Left lung (tissue), 14 donors: ENCODE measurements at regions of chr11 and their contacts with region 1.

Region 1: GRCh38 chr11:66579017-66579606 is 10.7 kb upstream of the CTSF start:
- DNase-seq: peak; percentile 61 to 93 (median 78)
- ATAC-seq: peak; percentile 98
- H3K4me3 ChIP-seq: no peak overlapping the region
- H3K27ac ChIP-seq: no peak overlapping the region
- H3K4me1 ChIP-seq: peaks cover 0 to 7% of the 10 kb centered on the region in 2 donors
- H3K27me3 ChIP-seq: no peaks in the 10 kb centered on the region
- CTCF ChIP-seq: peak; percentile 81

Region 2: DNA sequence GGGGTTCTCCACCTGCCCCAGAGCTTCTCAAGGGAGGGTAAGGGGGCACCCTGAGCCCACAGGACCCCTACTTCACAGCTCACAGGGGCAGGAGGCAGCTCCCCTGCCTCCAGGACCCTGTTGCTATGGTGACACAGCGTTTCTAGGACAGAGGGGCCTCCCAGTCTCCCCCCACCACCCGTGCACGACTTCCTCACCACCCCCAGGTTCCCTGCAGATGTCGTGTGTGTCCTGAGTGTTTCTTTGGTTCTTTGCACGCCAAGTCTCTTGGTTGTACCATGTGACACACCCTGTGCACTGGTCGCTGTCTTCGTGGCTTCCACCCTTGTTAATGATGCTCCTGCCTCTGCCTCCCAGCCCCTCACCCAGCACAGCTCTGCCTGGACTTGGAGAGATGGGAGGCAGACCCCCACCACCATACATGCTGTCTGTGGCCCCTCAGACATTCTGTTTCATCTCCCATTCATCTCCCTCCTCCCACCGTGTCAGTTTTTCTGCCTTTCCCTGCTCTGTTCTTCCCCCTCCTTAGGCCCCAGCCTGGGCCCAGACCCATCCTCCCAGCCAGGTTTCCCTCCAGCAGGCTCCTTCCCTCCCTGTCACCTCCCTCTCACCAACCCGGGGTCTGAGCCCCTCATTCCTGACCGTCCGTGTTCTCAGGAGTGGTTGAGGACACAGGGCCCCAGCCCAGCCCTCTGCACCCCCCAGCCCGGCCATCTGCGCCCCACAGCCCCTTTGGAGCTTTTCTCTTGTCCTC is 335.2 kb before region 1 on chr11:
- intact Hi-C with region 1: no loop called
- DNase-seq: no peak
- ATAC-seq: no peak
- H3K4me3 ChIP-seq: no peak overlapping the region
- H3K27ac ChIP-seq: no peak overlapping the region
- H3K4me1 ChIP-seq: no peaks in the 10 kb centered on the region
- H3K27me3 ChIP-seq: no peaks in the 10 kb centered on the region
- CTCF ChIP-seq: no peak

Region 3: DNA sequence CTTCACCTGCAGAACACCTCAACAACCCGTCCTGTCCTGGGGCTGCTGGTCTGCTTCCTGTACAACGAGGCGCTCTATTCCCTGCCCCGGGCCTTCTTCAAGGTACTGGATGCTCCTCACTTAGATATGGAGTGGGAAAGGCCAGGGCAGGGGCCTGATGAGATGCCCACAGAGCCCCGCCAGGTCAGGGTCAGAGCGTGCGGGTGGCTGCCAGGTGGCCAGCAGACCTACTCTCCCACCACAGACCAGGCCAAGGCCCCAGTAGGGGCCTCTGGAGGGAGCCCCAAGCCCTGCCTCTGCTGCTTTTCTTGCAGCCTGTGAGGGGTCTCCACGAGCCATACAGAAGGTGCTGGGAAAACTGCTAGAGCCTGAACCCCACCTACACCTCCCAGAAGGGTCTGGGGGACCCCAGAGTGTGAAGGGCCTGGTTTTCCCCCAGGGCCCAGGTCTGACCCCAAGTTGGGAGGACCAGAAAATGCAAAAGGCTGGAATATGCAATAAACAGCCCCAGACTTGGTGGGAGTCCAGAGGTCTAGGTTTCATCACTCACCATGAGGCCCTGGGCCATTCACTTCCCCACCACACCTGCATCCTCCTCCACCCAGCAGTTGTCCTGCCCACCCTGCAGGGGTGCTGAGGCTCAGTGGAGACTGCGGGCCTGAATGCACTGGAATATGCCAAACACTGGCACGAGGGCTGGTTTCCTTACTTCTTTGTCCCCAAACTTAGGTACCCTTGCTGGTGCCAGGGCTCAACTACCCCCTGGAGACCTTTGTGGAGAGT is 48.0 kb before region 1 on chr11:
- intact Hi-C with region 1: no loop called
- DNase-seq: peak in 1 of 4 donors; percentile 49
- ATAC-seq: no peak
- H3K4me3 ChIP-seq: no peak overlapping the region
- H3K27ac ChIP-seq: no peak overlapping the region
- H3K4me1 ChIP-seq: no peaks in the 10 kb centered on the region
- H3K27me3 ChIP-seq: no peaks in the 10 kb centered on the region
- CTCF ChIP-seq: no peak

Region 4: DNA sequence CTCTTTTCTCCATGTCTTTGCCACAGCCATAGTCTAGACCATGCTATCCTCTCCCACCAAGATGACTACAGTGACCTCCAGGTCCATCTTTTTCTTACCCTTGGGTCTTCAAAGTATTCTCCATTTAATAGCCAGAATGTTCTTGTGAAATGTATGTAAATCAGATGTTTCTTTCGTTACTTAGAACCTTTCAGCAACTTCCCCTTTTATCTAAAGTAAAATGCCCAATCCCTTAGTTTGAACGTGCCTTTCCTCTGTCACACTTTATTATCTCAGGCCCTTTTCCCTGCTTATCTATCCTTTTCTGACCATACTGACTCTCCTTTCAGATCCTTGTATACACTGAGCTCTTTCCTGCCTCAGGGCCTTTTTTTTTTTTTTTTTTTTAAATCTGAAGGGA is 80.7 kb after region 1 on chr11:
- intact Hi-C with region 1: no loop called
- DNase-seq: no peak
- ATAC-seq: no peak
- H3K4me3 ChIP-seq: no peak overlapping the region
- H3K27ac ChIP-seq: peak overlapping the region in 1 of 2 donors; percentile 23
- H3K4me1 ChIP-seq: peaks cover 0 to 4% of the 10 kb centered on the region in 2 donors
- H3K27me3 ChIP-seq: no peaks in the 10 kb centered on the region
- CTCF ChIP-seq: no peak

Region 5: DNA sequence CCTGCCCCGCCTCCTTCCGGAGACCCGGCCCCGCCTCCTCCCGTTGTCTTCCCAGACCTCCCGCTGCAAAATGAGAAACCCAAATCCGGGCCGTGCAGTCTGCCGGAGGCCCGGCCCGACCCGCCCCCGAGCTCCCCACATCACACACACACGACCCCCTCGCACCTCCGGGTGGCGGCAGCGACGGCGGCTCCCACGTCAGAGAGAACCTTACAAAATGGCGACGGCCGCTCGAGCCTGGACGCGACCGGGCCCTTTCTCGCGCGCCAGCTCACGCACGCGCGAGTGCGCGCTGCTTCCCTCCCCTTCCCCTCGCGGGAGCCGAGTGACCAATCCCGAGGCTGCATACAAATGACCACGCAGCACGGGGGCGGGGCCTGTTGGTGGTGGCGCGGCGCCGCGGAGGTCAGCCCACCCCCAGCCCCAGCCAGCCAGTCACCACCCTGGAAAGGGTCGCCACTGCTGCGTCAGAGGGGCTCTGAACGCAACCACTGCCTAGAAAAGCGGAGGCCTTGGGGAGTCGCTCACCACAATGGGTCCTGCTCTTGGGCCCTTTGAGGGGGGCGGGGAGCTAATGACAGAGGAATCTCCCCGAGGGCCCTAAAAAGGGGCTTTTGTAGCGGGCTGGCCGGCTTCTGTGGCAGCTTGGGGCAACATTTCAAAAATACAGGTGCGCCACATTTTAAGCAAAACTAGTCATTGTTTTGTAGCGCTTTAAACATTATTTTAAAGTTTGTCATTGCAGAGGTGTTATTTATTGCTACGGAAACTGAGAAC is 98.7 kb after region 1 on chr11 and contains the start of gene RBM4B:
- intact Hi-C with region 1: loop called (anchors 2 to 10 kb)
- DNase-seq: peak; percentile 96 to 98 (median 97)
- ATAC-seq: peak; percentile 98
- H3K4me3 ChIP-seq: peak within 1 kb of the TSS; percentile 46 to 75
- H3K27ac ChIP-seq: peak within 1 kb of the TSS; percentile 90 to 96
- H3K4me1 ChIP-seq: peaks cover 23 to 45% of the 10 kb centered on the region in 2 donors
- H3K27me3 ChIP-seq: no peaks in the 10 kb centered on the region
- CTCF ChIP-seq: peak in 1 of 2 donors; percentile 9
- polyA plus RNA-seq, gene RBM4B: 69.9 to 78.9 (median 73.2) TPM

Region 6: GRCh38 chr11:66686801-66687750 is 108.0 kb after region 1 on chr11:
- intact Hi-C with region 1: loop called in 1 of 2 experiments (anchors 10 kb)
- DNase-seq: no peak
- ATAC-seq: no peak
- H3K4me3 ChIP-seq: no peak overlapping the region
- H3K27ac ChIP-seq: no peak overlapping the region
- H3K4me1 ChIP-seq: no peaks in the 10 kb centered on the region
- H3K27me3 ChIP-seq: no peaks in the 10 kb centered on the region
- CTCF ChIP-seq: no peak